Spleen (tissue), 13 donors: ENCODE measurements at regions of chr1 and their contacts with region 1.

Region 1: DNA sequence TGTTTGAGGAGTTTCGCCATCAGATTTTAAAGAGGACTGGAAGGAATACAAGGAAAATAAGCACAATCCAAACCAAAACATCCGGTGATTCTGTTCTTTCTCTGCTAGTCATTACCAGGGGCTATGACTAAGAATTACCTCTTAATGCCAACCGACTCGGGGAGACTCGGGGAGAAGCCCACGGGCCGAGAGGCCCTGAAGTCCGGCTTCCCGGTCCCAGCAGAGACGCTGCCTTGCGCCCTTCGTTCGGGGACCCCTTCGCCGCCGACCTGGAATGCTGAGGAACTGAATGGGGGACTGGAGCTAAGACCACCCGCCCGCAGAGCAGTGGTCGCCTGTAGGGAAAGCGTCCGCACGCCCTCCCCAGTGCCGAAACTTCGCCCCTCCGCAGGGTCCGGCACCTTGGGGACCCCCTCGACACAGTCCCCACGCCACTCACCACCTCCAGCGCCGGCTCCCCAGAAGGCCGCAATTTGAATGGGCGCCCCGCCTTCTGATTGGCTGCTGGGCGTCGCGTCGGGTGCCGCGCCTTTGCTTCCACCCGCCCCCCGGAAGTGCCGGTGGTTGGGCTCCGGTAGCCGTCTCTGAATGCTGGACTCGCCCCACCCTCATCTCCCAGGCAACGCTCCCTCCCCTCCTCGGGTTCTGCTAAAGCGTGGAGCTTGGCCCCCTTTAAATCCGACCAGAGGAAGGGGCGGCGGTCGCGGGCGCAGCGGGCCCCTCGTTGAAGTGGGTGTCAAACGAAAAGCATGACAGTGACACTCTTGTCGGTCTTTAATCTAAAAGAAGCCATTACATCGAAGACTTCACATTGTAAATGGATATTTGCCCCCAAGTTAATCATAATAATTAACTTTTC is at the start of gene KIF14:
- DNase-seq: peak; percentile 98
- H3K4me3 ChIP-seq: peak within 1 kb of the TSS; percentile 45 to 90 (median 62)
- H3K27ac ChIP-seq: peak within 1 kb of the TSS; percentile 36 to 87 (median 81)
- H3K4me1 ChIP-seq: peaks cover 11 to 53% (median 35%) of the 10 kb centered on the region in 6 donors
- H3K27me3 ChIP-seq: no peaks in the 10 kb centered on the region
- CTCF ChIP-seq: peak in 1 of 11 experiments; percentile 17
- POLR2A ChIP-seq: no peak
- total RNA-seq, gene KIF14: 0.58 to 3.3 (median 1.6) TPM

Region 2: GRCh38 chr1:200669314-200670241 is 49.1 kb after region 1 on chr1 and contains the start of gene DDX59:
- intact Hi-C with region 1: loop called (anchors 10 kb)
- DNase-seq: peak; percentile 97
- H3K4me3 ChIP-seq: peak within 1 kb of the TSS; percentile 64 to 91 (median 68)
- H3K27ac ChIP-seq: peak within 1 kb of the TSS; percentile 95 to 99 (median 99)
- H3K4me1 ChIP-seq: peaks cover 5 to 61% (median 39%) of the 10 kb centered on the region in 6 donors
- H3K27me3 ChIP-seq: no peaks in the 10 kb centered on the region
- CTCF ChIP-seq: peak in 2 of 11 experiments; percentile 9 to 12
- POLR2A ChIP-seq: peak; percentile 15 to 71 (median 70)
- total RNA-seq, gene DDX59: 29.6 to 37.5 (median 30.1) TPM

Region 3: DNA sequence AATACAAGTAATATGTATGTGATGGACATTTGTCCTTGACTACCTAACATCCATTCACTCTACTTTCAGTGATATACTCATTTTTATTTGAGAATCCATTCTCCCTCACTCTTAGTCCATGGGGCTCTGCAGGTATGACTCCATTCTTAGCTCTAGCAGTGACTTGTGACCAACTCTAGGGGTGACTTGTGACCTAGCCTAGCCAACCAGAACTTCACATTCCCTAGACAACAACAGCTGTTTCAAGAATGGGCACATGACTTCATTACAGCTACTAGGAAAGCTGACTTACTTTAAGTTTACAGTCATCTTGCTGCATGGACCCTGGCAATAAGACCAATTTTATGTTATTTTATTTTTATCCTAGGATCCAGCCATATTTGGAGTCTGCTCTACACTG is 72.8 kb after region 1 on chr1:
- intact Hi-C with region 1: no loop called
- DNase-seq: no peak
- H3K4me3 ChIP-seq: no peak overlapping the region
- H3K27ac ChIP-seq: no peak overlapping the region
- H3K4me1 ChIP-seq: no peaks in the 10 kb centered on the region
- H3K27me3 ChIP-seq: no peaks in the 10 kb centered on the region
- CTCF ChIP-seq: no peak
- POLR2A ChIP-seq: no peak

Region 4: GRCh38 chr1:200802865-200803512 is 182.5 kb after region 1 on chr1:
- intact Hi-C with region 1: loop called (anchors 2 kb)
- DNase-seq: peak; percentile 83
- H3K4me3 ChIP-seq: no peak overlapping the region
- H3K27ac ChIP-seq: no peak overlapping the region
- H3K4me1 ChIP-seq: peaks cover 0 to 11% (median 7%) of the 10 kb centered on the region in 6 donors
- H3K27me3 ChIP-seq: no peaks in the 10 kb centered on the region
- CTCF ChIP-seq: peak; percentile 73 to 92 (median 89)
- POLR2A ChIP-seq: no peak